ENCODE measurements at regions of chr3 and their contacts with region 1.

Region 1: DNA sequence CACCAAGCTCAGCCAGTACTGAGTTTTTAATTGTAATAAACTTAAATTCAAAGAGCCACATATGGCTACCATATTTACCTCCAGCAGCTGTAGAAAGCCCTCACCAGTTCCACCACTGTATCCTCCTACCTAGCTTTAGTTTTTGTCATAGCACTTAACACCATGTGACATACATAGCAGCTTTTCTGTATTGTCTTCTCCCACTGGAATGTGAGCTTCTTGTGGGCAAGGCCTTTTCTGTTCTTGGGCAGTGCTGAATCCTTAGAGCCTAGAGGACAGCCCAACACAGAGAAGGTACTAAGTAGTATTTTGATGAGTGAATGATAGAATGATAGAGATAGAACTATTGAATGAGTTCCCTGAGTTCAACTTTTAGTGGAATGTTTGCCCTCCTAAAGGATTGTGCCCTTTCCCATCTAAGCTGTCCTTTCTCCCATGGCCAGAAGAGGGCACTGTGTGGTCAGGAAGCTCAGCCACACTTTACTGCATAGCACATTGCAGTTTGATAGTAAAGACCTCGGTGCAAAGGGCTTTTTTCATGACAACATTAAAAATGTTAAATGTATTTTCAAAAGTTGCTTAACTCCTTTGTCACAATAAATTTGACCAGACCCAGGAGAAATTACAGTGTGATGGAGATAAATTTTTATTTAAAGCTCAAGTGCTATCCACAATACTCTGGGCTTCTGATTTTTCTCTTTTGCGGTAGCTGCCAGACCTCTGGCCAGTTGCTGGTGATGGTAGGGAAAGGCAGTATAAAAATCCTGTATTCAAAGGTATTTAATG is 115.8 kb downstream of the GHSR start:
- DNase-seq: peak in 4 of 5 donors; percentile 49 to 81 (median 69)
- H3K4me3 ChIP-seq: no peak overlapping the region
- H3K27ac ChIP-seq: peak overlapping the region in 1 of 2 donors; percentile 26
- H3K4me1 ChIP-seq: peaks cover 3% of the 10 kb centered on the region
- H3K27me3 ChIP-seq: no peaks in the 10 kb centered on the region
- CTCF ChIP-seq: peak; percentile 67 to 88 (median 83)
- EP300 ChIP-seq: no peak
- POLR2A ChIP-seq: no peak

Region 2: DNA sequence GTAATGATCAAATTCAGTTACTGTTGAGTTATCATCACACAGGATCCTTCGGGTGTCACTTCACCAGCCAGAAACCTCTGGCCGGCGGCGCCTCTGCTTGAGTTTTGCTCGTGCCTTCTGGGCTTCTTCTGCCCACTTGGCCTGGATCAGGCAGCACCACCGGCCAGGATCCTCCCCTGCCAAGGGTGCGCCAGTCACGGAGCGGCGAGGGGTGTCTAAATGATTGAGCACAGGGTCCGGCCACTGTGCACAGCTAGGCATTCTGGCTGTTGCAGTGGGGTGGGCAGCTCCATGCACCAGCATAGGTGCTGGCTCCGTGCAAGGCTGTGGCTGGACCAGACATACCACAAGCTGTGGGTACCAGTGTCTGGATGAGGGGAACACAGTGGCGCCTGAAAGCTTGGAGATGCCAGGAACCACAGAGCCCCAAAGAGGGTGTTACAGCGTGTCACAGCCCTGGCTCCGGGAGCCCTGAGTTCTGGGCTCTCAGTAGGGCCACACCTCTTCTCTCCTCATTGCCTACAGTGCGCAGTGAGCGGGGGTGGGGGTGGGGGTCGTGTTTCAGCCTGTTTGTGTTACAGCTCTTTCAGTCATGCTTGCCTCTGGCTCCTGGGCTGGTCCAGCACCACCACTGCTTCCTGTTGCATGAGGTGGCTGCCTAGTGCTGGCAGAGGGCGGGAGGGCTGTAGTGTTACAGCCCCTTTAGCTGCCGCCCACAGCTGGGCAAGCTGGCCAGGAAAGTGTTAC is 123.7 kb before region 1 on chr3:
- intact Hi-C with region 1: loop called in 1 of 4 experiments (anchors 5 kb)
- DNase-seq: no peak
- H3K4me3 ChIP-seq: no peak overlapping the region
- H3K27ac ChIP-seq: no peak overlapping the region
- H3K4me1 ChIP-seq: peaks cover 20% of the 10 kb centered on the region
- H3K27me3 ChIP-seq: no peaks in the 10 kb centered on the region
- CTCF ChIP-seq: no peak
- EP300 ChIP-seq: no peak
- POLR2A ChIP-seq: no peak

Region 3: DNA sequence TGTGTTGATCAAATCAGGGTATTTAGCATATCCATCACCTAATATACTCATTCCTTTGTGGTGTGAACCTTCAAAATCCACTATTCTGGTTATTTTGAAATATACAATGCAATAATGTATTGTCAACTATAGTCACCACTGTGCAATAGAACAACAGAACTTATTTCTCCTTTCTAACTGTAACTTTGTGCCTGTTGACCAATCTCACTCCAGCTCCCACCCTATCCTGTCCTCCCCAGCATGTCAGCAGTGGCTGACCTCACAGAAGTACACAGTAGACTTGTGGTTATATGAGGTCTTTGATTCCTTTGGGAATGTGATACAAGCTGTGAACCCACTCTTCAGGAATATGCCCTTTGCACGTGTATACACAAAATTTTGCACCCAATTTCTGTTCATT is 482.3 kb after region 1 on chr3:
- intact Hi-C with region 1: no loop called
- DNase-seq: no peak
- H3K4me3 ChIP-seq: no peak overlapping the region
- H3K27ac ChIP-seq: no peak overlapping the region
- H3K4me1 ChIP-seq: no peaks in the 10 kb centered on the region
- H3K27me3 ChIP-seq: no peaks in the 10 kb centered on the region
- CTCF ChIP-seq: no peak
- EP300 ChIP-seq: no peak
- POLR2A ChIP-seq: no peak

Measured in ovary (tissue), 10 donors.